Prostate gland (tissue), 2 donors: ENCODE measurements at regions of chr1 and their contacts with region 1.

Region 1: GRCh38 chr1:241611063-241611462 is 29.1 kb downstream of the CHML start:
- DNase-seq: peak; percentile 17
- H3K4me3 ChIP-seq: no peak overlapping the region
- H3K27ac ChIP-seq: no peak overlapping the region
- H3K4me1 ChIP-seq: no peaks in the 10 kb centered on the region
- H3K27me3 ChIP-seq: no peaks in the 10 kb centered on the region
- CTCF ChIP-seq: peak in 3 of 4 experiments; percentile 59 to 73 (median 66)
- POLR2A ChIP-seq: no peak

Region 2: GRCh38 chr1:241834733-241835377 is 223.8 kb after region 1 on chr1:
- intact Hi-C with region 1: loop called (anchors 10 kb)
- DNase-seq: no peak
- H3K4me3 ChIP-seq: no peak overlapping the region
- H3K27ac ChIP-seq: no peak overlapping the region
- H3K4me1 ChIP-seq: no peaks in the 10 kb centered on the region
- H3K27me3 ChIP-seq: no peaks in the 10 kb centered on the region
- CTCF ChIP-seq: peak in 2 of 4 experiments; percentile 33 to 53
- POLR2A ChIP-seq: no peak

Region 3: DNA sequence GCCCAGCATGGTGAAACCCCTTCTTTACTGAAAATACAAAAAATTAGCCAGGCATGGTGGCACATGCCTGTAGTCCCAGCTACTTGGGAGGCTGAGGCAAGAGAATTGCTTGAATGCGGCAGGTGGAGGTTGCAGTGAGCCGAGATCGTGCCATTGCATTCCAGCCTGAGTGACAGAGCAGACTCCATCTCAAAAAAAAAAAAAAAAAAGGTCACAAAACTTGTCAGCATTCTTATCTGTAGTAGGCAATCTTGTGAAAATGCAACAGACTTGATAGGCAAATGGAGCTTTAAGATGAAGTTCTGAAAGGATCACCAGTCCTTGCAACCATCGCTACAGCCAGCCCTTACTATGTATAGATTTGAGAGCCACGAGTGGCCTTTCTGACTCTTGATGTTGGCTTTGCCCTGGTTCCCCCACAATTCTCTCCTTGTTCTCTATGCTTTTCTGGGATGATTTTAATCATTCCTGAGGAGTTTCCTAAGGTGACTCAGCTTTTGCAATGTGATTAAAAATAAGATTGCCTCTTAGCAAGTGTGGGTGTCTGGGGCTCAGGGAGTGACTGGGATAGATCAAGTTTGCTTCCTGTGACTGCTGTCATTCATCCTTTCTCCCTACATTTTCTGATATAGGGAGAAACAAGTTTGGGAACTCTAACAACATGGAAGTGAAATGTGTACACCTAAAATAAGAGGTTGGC is 395.0 kb after region 1 on chr1:
- intact Hi-C with region 1: loop called (anchors 10 kb)
- DNase-seq: no peak
- H3K4me3 ChIP-seq: no peak overlapping the region
- H3K27ac ChIP-seq: no peak overlapping the region
- H3K4me1 ChIP-seq: no peaks in the 10 kb centered on the region
- H3K27me3 ChIP-seq: no peaks in the 10 kb centered on the region
- CTCF ChIP-seq: no peak
- POLR2A ChIP-seq: no peak